ENCODE measurements at regions of chr14 and their contacts with region 1.

Region 1: DNA sequence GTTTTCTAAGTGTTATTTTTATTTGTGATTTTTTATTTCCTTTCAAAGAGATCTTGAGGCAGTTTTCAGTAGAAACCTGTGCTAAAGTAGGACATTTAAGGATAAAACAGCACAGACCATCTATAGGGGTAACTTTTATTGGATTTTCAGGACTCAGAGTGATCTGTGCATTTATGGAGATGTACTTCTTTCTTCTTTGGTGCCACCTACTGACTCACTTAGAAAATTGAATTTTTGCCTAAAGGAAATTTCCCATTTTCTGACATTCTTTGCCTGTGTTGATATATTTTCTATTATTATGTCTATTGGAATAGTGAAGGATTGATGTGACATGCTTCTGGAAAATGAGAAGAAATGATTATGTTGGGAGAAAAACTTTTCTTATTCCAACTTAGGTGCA is 113.0 kb downstream of the UNC79 start:
- DNase-seq: no peak
- ATAC-seq: no peak
- H3K4me3 ChIP-seq: no peak overlapping the region
- H3K27ac ChIP-seq: no peak overlapping the region
- H3K4me1 ChIP-seq: no peaks in the 10 kb centered on the region
- H3K27me3 ChIP-seq: no peaks in the 10 kb centered on the region
- CTCF ChIP-seq: peak; percentile 22 to 53 (median 33); a peak in 4 of 6 replicates
- EP300 ChIP-seq: no peak
- POLR2A ChIP-seq: no peak
- RAD21 ChIP-seq: peak; percentile 55

Region 2: DNA sequence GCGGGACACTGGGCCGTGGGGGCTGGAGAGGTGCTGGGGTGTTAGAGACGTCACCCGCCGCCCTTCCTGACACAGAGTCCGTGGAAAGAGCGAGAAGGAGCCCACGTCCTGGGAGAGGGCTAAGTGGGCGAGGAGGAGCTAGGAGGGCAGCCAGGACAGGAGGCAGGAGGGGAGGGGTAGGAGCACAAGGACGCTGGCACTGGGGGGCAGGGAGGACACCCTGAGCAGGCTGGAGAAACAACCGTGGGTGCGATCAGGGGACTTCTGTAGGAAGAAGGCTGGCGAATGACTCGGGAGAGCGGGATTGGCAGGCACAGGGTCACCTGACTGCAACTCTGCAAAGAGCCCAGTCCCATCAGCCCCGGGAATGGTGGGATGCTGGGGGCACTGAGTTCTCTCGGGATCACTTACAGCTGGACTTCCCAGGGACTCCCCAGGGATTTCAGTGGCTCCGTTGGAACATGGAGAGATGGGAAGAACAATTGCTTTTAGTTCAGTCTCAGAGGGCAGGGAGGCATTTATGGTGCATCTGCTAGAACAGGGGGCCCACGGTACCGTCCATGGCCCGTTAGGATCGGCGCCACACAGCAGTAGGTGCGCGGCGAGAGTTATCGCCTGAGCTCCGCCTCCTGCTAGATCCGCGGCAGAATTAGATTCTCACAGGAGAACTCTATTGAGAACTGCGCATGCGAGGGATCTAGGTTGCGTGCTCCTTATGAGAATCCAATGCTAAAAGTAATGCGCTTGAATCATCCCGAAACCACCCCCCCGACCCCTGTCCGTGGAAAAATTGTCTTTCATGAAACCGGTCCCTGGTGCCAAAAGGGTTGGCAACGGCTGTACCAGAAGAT is 312.4 kb before region 1 on chr14:
- CTCF ChIA-PET with region 1: interaction called, 17 read pairs
- POLR2A ChIA-PET with region 1: interaction called, 3 read pairs
- RAD21 ChIA-PET with region 1: interaction called, 5 read pairs
- SMC1A ChIA-PET with region 1: interaction called, 7 read pairs
- in situ Hi-C with region 1: loop called (anchors 25 kb)
- intact Hi-C with region 1: loop called (anchors 5 kb)
- DNase-seq: no peak
- ATAC-seq: no peak
- H3K4me3 ChIP-seq: no peak overlapping the region; the same call in 1 of the 2 replicates
- H3K27ac ChIP-seq: no peak overlapping the region
- H3K4me1 ChIP-seq: no peaks in the 10 kb centered on the region; the same call in 1 of the 2 replicates
- H3K27me3 ChIP-seq: no peaks in the 10 kb centered on the region
- CTCF ChIP-seq: no peak
- EP300 ChIP-seq: no peak
- POLR2A ChIP-seq: no peak
- RAD21 ChIP-seq: no peak

Region 3: DNA sequence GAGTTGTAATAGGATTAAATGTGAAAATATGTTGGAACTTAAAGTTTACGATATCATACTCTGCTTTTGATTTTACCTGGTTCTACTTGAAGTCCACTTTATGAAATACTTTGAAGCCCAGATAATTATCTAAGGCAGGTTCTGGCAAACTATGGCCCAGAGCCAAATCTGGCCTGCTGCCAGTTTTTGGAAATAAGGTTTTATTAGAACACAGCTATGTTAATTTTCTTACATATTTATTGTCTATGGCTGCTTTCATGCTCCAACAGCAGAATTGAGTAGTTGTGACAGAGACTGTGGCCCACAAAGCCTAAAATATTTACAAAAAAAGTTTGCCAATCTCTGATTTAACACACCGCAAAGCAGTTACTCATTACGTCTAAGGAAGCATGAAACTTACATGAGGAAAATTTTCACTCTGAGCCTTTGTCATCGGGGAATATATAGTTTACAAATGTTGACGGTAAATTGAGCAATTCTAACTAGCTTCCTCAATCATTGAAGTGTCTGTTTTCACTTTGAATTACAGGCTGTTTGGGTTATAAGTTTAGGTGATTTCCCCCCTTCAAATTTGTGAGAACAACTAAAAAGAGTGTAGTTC is 16.6 kb before region 1 on chr14:
- CTCF ChIA-PET with region 1: interaction called, 9 read pairs
- POLR2A ChIA-PET with region 1: interaction called, 4 read pairs
- RAD21 ChIA-PET with region 1: interaction called, 6 read pairs
- SMC1A ChIA-PET with region 1: interaction called, 36 read pairs
- in situ Hi-C with region 1: no loop called
- intact Hi-C with region 1: no loop called
- DNase-seq: no peak
- ATAC-seq: peak; percentile 76
- H3K4me3 ChIP-seq: no peak overlapping the region
- H3K27ac ChIP-seq: no peak overlapping the region
- H3K4me1 ChIP-seq: no peaks in the 10 kb centered on the region
- H3K27me3 ChIP-seq: no peaks in the 10 kb centered on the region
- CTCF ChIP-seq: no peak
- EP300 ChIP-seq: no peak
- POLR2A ChIP-seq: no peak
- RAD21 ChIP-seq: no peak

Region 4: DNA sequence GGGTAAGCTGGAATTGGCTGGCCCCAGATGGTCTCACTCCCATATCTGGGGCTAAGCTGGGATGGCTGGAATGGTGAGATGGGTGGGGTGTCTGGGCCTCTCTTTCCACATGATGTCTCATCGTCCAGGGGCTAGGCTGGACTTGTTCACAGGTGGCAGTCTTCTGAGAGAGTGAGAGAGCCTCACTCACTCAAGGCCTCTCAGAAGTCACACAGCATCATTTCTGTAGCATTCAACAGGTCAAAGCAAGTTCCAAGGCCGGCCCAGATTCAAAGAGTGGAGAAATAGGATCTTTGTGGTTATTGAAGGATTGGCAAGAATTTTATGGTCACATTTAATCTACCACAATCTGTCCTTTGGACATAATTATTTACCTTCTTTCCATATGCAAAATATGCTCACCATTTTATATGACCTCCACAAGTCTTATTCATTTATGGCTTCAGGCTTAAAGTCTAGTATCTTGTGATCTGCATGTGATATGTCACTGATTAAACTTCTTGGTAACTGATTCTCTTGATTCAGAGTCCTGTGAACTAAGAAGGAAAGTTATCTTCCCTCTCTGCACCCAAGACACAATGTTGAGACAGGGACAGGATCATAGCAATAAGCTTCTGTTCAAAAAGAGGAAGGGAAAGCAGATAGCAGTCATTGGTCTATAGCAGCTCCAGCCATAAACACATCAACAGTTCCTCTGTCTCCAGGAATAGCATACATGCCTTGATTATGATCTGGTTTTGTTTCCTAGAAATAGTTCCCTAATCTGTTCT is 10.1 kb before region 1 on chr14:
- CTCF ChIA-PET with region 1: interaction called, 33 read pairs
- POLR2A ChIA-PET with region 1: interaction called, 5 read pairs
- RAD21 ChIA-PET with region 1: interaction called, 32 read pairs
- SMC1A ChIA-PET with region 1: interaction called, 36 read pairs
- in situ Hi-C with region 1: no loop called
- intact Hi-C with region 1: no loop called
- DNase-seq: peak; percentile 47
- ATAC-seq: peak; percentile 92
- H3K4me3 ChIP-seq: no peak overlapping the region
- H3K27ac ChIP-seq: 0 out of 2 replicates have a peak overlapping the region, but pooled peaks have one; percentile 13
- H3K4me1 ChIP-seq: peaks cover 6% of the 10 kb centered on the region
- H3K27me3 ChIP-seq: no peaks in the 10 kb centered on the region
- CTCF ChIP-seq: no peak
- EP300 ChIP-seq: no peak; a peak in 2 of 4 replicates
- POLR2A ChIP-seq: no peak
- RAD21 ChIP-seq: no peak

Region 5: DNA sequence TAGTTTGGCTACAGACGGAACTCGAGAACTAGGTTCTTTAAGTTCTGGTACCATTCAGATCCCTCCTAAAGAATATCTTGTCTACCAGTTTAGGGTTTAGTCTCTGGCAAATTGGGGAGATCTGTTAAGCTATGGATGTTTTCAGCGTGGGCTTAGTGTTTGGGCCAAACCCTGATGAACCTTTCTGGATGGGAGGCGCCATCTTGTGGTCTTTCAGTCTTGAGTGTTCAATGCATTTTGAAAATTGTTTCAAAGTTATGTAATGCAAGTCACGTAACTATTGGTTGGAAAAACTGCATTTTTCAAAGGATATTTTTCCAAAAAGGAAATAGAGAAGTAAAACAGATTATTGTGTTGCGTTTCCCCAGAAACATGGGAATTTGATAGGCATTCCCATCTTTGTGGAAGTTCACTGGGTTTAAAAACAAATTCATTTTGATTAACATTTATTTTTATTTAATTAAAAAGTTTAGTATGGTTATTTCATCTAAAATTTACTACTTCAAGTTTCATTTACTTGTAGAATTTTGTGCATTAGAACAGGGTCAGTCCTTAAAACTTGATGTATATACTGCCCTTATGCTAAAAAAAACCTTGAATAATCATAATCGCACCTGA is 75.5 kb after region 1 on chr14:
- CTCF ChIA-PET with region 1: interaction called, 7 read pairs
- POLR2A ChIA-PET with region 1: no interaction called
- RAD21 ChIA-PET with region 1: interaction called, 16 read pairs
- SMC1A ChIA-PET with region 1: interaction called, 11 read pairs
- in situ Hi-C with region 1: no loop called
- intact Hi-C with region 1: loop called (anchors 5 kb)
- DNase-seq: peak; percentile 5
- ATAC-seq: peak; percentile 81
- H3K4me3 ChIP-seq: no peak overlapping the region
- H3K27ac ChIP-seq: no peak overlapping the region
- H3K4me1 ChIP-seq: no peaks in the 10 kb centered on the region
- H3K27me3 ChIP-seq: peaks cover 0 to 3% of the 10 kb centered on the region in 2 experiments; a peak in 2 of 4 replicates
- CTCF ChIP-seq: peak; percentile 61 to 80 (median 67)
- EP300 ChIP-seq: no peak
- POLR2A ChIP-seq: no peak
- RAD21 ChIP-seq: peak; percentile 83

Measured in GM12878 (cell line).